ENCODE measurements at regions of chr9 and their contacts with region 1.

Region 1: DNA sequence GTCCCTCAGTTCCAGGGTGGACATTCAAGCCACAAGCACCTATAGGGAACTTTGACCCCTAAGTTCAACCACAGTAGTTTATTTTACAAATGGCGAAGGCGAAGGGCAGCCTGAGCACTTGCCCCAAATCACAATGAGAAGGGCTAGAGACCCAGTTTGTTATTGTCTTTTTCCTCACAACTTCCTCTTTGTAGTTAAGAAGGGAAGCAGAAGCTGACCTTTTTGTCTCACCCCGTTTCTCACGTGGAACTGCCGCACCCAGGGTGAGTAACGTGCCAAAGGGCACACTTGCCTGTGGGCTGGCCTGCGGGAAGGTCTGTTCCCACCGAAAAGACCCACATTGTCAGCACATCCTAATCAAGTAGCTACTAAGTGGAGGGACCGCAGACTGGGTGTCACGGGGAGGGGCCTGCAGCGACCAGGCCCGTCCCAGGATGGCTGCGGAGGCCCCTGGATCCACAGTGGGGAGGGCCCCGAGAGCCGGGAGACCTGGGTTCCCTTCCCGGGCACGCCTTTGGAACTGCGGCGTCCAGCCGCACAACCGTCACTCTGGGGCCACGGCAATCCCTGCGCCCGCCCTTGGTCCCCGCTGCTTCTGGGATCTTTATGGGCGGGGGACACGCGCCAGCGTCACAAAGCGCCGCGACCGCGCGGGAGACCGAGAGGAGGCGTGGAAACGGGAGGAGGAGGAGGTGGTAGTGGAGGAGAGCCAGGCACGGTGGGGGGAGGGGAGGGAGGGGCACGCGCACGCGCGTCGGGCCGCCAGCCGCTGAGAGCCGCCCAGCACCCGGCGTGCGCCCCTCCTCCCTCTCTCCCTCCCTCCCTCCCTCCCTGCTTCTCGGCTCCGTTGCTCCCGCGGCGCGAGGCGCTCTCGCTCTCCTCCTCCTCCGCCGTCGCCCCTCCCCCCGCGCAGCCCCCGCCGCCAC is at the start of gene UBE2R2:
- DNase-seq: peak; percentile 88
- H3K4me3 Mint-ChIP-seq: peak within 1 kb of the TSS; percentile 80
- H3K27ac Mint-ChIP-seq: peak within 1 kb of the TSS; percentile 82
- H3K4me1 Mint-ChIP-seq: peaks cover 27% of the 10 kb centered on the region
- H3K27me3 Mint-ChIP-seq: no peaks in the 10 kb centered on the region
- CTCF ChIP-seq: no peak
- total RNA-seq, gene UBE2R2: 33.8 and 41.6 TPM in 2 replicates

Region 2: GRCh38 chr9:33778700-33779351 is 37.8 kb before region 1 on chr9:
- CTCF ChIA-PET with region 1: interaction called, 24 read pairs
- POLR2A ChIA-PET with region 1: interaction called, 14 read pairs
- intact Hi-C with region 1: no loop called
- DNase-seq: peak; percentile 79
- H3K4me3 Mint-ChIP-seq: peak overlapping the region; percentile 62
- H3K27ac Mint-ChIP-seq: peak overlapping the region; percentile 27
- H3K4me1 Mint-ChIP-seq: peaks cover 42% of the 10 kb centered on the region
- H3K27me3 Mint-ChIP-seq: no peaks in the 10 kb centered on the region
- CTCF ChIP-seq: peak; percentile 60

Region 3: GRCh38 chr9:33843312-33843961 is 26.8 kb after region 1 on chr9:
- CTCF ChIA-PET with region 1: interaction called, 132 read pairs
- POLR2A ChIA-PET with region 1: interaction called, 56 read pairs
- intact Hi-C with region 1: no loop called
- DNase-seq: no peak
- H3K4me3 Mint-ChIP-seq: no peak overlapping the region
- H3K27ac Mint-ChIP-seq: no peak overlapping the region
- H3K4me1 Mint-ChIP-seq: peaks cover 6% of the 10 kb centered on the region
- H3K27me3 Mint-ChIP-seq: no peaks in the 10 kb centered on the region
- CTCF ChIP-seq: no peak

Region 4: GRCh38 chr9:33858346-33858885 is 41.8 kb after region 1 on chr9:
- CTCF ChIA-PET with region 1: interaction called, 132 read pairs
- POLR2A ChIA-PET with region 1: interaction called, 56 read pairs
- intact Hi-C with region 1: no loop called
- DNase-seq: no peak
- H3K4me3 Mint-ChIP-seq: no peak overlapping the region
- H3K27ac Mint-ChIP-seq: no peak overlapping the region
- H3K4me1 Mint-ChIP-seq: peaks cover 13% of the 10 kb centered on the region
- H3K27me3 Mint-ChIP-seq: no peaks in the 10 kb centered on the region
- CTCF ChIP-seq: no peak

Region 5: DNA sequence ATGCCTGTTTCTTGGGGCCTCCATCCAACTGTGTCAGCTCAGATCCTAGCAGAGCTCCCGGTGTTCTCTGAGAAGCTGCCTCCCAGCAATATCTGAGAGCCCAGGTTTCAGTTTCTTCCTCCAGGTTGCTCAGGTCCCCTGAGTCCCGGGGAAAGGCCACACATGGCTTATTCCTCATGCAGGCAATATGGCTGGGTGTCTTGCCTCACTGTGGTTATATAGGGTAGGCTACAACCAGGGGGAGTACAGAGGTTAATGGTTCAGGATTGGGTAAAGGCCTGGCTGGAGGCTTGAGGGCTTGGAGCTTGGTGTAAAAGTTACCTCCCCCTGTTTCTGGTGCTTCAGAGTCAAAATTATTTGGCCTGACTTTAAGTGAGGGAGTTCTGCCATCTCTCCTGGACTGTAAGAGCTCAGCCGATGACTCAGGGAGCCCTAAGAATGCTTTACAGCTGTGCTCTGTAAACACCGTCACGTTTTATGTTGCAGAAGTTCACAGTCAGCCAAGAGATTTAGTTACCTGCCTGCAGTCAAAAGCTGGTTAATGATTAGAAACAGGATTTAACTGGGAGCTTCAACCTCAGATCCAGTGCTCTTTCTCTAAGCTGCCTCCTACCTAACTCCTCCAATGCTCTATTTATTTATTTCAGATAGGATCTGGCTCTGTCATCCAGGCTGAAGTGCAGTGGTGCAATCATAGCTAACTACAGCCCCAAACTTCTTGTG is 256.4 kb after region 1 on chr9:
- CTCF ChIA-PET with region 1: interaction called, 5 read pairs
- POLR2A ChIA-PET with region 1: interaction called, 11 read pairs
- intact Hi-C with region 1: loop called (anchors 5 kb)
- DNase-seq: peak; percentile 80
- H3K4me3 Mint-ChIP-seq: no peak overlapping the region
- H3K27ac Mint-ChIP-seq: peak overlapping the region; percentile 81
- H3K4me1 Mint-ChIP-seq: peaks cover 22% of the 10 kb centered on the region
- H3K27me3 Mint-ChIP-seq: no peaks in the 10 kb centered on the region
- CTCF ChIP-seq: no peak